Cardiac septum (tissue), 1 donor: ENCODE measurements at regions of chr9 and their contacts with region 1.

Region 1: GRCh38 chr9:136991993-136992818 is at the start of gene PAXX:
- DNase-seq: peak; percentile 98
- total RNA-seq, gene PAXX: 26.0 TPM

Region 2: DNA sequence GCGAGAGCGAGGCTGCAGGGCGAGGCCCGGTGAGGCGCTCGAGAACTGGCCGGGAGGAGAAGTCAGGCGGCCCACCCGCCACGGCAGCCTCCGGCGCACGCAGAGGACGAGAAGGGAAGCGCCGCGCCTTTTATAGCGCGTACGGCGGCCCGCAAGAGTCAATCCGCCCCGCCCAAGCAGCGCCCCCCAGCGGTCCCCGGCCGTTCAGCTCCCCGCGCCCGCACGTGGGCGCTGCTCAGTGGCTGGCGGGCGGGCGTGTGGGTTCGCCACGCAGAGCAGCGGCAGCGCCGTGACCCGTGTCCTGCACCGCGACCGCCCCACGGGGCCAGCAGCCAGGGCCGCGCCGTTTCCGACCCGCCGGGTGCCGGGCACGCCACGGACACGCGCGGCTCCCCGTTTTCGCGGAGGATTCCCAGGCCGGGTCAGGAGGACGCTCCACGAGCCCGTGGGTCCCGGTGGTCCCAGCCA is 264.1 kb before region 1 on chr9:
- intact Hi-C with region 1: no loop called
- DNase-seq: peak; percentile 94

Region 3: DNA sequence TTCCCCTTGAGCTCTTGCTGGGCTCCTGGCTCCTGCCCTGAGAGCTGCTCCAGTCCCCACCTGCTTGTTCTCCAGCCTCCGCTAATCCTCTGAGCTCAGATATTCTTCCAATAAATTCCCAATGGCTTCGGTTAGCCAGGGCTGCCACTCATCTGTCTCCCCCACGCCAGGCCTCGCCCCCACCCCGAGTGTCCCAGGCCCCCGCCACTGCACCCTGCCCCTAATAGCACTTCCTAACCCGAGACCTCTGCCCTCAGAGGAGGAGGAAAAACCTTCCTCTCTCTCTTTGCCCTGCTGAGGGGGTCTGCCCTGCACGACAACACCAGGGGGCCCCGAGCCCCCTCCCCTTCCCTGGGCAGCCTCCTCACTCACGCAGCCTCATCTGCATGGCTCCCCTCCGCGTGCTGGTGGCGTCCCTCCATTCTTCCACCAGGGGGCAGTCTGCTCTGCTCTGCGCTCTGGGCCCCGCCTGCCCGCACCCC is 222.5 kb before region 1 on chr9:
- intact Hi-C with region 1: no loop called
- DNase-seq: no peak

Region 4: DNA sequence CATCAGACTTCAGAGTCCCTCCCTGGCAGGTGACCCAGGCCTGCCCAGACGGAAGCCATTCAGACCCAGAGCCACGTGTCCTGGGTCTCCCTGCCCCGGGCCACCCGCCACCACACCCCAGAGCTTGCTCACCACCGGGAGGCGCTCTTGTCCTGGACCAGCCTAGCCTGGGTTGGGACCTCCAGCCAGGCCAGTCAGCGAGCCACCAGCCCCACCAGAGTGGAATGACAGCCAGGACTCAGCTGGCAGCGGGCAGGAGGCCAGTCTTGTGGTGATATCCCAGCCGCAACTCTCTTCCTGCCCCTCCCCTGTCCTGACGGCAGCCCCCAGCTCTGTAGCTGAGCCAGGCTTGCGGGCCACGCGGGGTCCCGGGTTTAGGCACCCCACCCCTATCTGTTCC is 16.6 kb before region 1 on chr9:
- intact Hi-C with region 1: loop called (anchors 2 kb)
- DNase-seq: no peak